IMR-90 (cell line): ENCODE measurements at regions of chr6 and their contacts with region 1.

Region 1: DNA sequence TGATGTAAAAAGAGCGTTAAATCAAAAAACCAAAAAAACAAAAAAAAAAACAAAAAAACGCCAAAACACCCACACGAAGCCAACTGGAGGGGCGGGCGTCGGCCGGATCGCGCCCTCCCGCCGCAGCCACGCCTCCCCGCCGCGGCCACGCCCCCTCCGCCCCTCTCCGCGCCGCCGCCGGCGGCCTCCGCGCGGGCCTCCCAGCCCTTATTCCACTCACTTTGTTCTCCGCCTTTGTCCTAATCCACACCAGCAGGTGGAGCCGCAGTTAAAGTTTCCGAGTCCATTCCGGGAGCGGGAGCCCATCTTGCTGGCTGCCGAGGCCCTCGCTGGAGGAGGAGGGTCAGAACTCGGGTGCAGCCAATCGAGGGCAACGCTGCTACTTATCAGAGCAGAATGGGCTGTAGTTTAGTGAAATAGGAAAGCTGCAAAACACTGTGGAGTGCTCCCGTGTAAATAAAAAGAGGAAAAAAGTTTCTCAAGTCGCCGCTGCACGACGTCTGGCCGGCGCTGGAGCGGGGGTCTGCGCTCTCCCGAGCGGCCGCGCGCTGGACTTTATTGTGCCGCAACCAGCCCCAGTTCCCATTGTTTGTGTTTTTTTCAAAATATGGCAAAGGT is at the start of gene ASF1A:
- DNase-seq: peak; percentile 98
- ATAC-seq: peak; percentile 89
- H3K4me3 ChIP-seq: peak within 1 kb of the TSS; percentile 79
- H3K27ac ChIP-seq: peak within 1 kb of the TSS; percentile 79
- H3K4me1 ChIP-seq: peaks cover 2% of the 10 kb centered on the region; the same call in 1 of the 2 replicates
- H3K27me3 ChIP-seq: no peaks in the 10 kb centered on the region
- CTCF ChIP-seq: peak; percentile 82
- POLR2A ChIP-seq: peak; percentile 49
- RAD21 ChIP-seq: peak; percentile 64
- total RNA-seq, gene ASF1A: 11.1 and 24.4 TPM in 2 replicates

Region 2: DNA sequence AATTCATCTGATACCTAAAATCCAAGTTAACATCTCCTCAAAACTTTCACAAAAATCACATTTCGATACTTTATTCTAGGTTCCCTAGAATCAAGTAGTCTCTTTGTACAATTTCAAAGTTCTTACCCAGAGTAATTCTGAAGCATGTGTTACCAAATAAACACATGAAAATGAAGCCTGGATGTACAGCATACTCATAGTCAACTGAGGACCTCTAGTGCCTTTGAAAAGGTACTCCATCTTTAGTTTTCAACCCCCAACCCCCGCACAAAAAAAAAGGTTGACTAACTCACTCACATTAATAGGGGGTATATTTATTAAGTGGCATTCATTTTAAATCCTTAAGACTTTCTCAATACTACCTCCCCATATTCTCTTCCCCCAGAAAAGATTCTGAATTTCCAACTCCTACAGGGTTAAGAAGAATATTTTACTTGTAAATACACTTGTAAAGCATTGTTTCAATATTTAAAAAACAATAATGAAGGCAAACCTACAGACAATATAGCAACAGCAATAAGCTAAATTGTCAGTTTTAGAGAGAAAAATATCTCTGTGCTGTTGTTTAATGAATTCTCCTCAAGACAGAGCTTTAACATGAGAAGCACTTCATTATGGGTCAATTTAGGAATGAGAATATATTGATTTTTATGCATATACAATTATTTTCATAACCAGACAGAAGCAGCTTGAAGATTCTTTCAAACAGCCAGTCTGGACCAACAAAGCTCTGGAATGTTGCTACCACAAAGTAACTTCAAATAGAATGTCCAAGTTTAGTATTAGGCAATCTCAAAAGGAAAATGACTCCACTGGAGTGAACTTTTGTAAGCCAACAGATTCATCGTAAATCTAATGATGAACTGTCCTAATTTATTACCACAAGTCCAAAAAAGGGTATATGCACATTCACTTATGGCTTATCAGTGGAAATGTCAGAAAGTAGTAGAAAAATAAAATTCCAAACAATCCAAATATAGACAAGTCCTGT is 342.6 kb before region 1 on chr6:
- CTCF ChIA-PET with region 1: no interaction called
- POLR2A ChIA-PET with region 1: no interaction called
- dilution Hi-C with region 1: no loop called
- in situ Hi-C with region 1: no loop called
- intact Hi-C with region 1: loop called (anchors 10 kb)
- DNase-seq: peak; percentile 79
- ATAC-seq: peak; percentile 84
- H3K4me3 ChIP-seq: no peak overlapping the region
- H3K27ac ChIP-seq: no peak overlapping the region
- H3K4me1 ChIP-seq: peaks cover 3% of the 10 kb centered on the region
- H3K27me3 ChIP-seq: no peaks in the 10 kb centered on the region
- CTCF ChIP-seq: peak; percentile 80
- POLR2A ChIP-seq: no peak
- RAD21 ChIP-seq: peak; percentile 81

Region 3: DNA sequence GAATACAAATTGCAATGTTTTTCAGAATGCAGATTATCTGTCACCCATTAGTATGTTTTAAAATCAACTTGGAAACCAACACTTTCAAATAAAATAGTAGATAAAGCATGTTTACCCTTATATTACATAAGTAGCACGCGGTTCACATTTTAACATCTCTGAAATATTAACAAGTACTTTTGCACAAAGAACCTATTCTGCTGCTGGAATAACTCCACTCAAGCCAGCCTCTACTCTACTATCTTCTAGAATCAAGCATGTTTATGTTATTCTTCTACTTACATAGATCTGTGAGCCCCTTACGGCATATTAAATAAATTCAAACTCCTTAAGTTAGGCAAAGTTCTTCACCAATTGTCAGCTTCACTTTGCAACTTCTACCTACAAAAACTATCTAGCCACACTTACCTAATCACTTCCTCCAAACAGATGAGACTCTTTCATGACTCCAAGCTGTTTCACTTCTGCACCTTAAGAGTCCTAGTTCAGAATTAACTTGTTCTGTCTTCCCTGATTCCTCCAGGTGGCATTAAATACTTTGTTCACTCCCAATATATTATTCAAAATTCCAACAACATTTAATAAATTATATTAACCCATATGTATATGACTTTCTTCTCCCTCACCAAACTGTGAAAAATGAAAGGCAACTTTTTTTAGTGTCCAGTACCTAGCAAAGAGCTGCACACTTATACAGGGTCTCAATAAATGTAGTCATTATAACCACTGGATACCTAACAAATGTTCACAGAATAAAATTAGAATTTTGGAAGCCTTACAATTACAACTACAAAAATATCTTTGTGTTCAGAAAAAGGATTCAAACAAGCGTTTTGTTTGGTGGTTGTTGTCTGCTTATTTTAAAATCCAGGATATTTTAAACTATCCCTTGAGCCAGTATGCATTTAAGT is 254.6 kb before region 1 on chr6:
- CTCF ChIA-PET with region 1: no interaction called
- POLR2A ChIA-PET with region 1: no interaction called
- dilution Hi-C with region 1: no loop called
- in situ Hi-C with region 1: no loop called
- intact Hi-C with region 1: loop called (anchors 2 kb)
- DNase-seq: no peak
- ATAC-seq: no peak
- H3K4me3 ChIP-seq: no peak overlapping the region
- H3K27ac ChIP-seq: no peak overlapping the region
- H3K4me1 ChIP-seq: peaks cover 3% of the 10 kb centered on the region; the same call in 1 of the 2 replicates
- H3K27me3 ChIP-seq: no peaks in the 10 kb centered on the region
- CTCF ChIP-seq: no peak
- POLR2A ChIP-seq: no peak
- RAD21 ChIP-seq: no peak

Region 4: DNA sequence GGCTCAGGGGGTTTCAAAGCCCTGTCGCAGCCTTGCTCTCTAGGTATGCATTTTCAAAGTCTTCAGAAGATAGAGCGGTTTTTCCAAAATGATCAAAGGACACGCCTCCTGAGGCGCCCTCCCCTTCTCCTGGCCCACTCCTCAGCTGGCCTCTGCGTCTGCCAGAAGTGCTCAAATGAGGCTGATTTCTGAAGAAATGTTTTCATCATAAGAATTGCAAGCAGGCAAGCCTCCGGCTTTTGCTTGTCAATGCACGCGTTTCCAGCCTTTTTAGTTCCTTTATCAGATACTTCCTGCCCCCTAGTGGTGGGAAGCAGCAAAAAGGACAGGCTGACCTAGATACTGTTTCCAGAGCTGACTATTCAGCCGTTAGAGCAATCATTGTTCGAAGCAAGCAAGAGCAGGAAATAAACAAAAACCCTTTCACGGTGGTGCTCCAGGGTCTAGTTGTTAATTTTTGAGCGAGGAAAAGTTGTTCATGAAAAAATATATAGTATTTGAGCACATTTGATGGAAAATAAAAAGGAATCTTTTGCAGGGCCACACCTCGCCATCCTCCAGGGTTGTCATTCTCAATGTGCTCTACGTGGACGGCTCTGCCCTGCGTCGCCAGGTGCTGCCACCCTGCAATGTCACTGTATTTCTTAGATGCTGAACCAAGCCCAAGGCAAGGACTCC is 93.4 kb before region 1 on chr6:
- CTCF ChIA-PET with region 1: no interaction called
- POLR2A ChIA-PET with region 1: no interaction called
- dilution Hi-C with region 1: no loop called
- in situ Hi-C with region 1: no loop called
- intact Hi-C with region 1: loop called (anchors 5 kb)
- DNase-seq: peak; percentile 85
- ATAC-seq: peak; percentile 99
- H3K4me3 ChIP-seq: no peak overlapping the region
- H3K27ac ChIP-seq: no peak overlapping the region
- H3K4me1 ChIP-seq: no peaks in the 10 kb centered on the region
- H3K27me3 ChIP-seq: no peaks in the 10 kb centered on the region
- CTCF ChIP-seq: peak; percentile 85
- POLR2A ChIP-seq: no peak
- RAD21 ChIP-seq: peak; percentile 71

Region 5: DNA sequence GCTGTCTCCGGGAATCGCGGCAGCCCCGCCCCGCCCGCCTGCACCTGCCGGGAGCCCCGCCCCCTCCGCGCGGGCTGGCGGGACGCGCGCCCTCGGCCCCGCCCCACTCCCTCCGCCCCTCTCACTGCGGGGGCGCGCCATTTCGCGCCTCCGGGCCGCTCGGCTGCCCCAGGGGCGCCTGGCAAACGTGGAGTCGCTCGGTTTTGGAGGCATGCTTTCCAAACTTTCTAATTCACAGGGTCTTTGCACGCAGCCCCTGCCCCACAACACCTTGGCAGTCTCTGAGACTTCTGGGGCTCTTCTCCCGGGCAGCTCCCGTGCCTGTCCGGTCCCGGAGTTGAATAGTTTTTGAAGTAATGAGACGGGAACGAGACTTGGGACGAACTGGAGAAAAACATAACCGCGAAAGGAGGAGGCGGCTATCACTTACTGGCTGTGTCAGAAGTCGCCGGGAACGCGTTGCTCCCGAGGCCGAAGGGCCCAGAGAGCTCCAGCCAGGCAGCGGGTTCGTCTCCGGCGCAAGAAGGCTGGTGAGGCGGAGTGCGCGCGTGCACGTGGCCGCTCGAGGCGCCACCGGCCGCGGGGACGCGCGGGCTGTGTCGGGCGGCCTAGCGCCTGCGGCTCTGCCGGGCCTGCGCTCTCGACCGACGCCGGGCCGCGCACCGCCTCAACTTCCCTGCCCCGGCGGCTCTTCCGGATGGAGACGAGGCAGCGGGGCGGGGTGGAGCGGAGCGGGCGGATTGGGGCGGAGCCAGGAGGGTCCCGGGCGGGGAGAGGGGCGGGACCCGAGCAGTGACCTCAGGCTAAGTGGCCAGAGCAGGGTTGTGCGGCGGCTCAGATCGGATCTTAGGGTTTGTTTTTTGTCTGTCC is 40.8 kb after region 1 on chr6 and contains the start of gene MCM9:
- CTCF ChIA-PET with region 1: no interaction called
- POLR2A ChIA-PET with region 1: no interaction called
- dilution Hi-C with region 1: no loop called
- in situ Hi-C with region 1: no loop called
- intact Hi-C with region 1: loop called (anchors 1 kb)
- DNase-seq: peak; percentile 77
- ATAC-seq: peak; percentile 98
- H3K4me3 ChIP-seq: peak within 1 kb of the TSS; percentile 86
- H3K27ac ChIP-seq: peak within 1 kb of the TSS; percentile 55
- H3K4me1 ChIP-seq: no peaks in the 10 kb centered on the region
- H3K27me3 ChIP-seq: no peaks in the 10 kb centered on the region
- CTCF ChIP-seq: no peak
- POLR2A ChIP-seq: peak; percentile 12; the same call in 1 of the 2 replicates
- RAD21 ChIP-seq: no peak
- total RNA-seq, gene MCM9: 7.2 and 7.8 TPM in 2 replicates

Region 6: DNA sequence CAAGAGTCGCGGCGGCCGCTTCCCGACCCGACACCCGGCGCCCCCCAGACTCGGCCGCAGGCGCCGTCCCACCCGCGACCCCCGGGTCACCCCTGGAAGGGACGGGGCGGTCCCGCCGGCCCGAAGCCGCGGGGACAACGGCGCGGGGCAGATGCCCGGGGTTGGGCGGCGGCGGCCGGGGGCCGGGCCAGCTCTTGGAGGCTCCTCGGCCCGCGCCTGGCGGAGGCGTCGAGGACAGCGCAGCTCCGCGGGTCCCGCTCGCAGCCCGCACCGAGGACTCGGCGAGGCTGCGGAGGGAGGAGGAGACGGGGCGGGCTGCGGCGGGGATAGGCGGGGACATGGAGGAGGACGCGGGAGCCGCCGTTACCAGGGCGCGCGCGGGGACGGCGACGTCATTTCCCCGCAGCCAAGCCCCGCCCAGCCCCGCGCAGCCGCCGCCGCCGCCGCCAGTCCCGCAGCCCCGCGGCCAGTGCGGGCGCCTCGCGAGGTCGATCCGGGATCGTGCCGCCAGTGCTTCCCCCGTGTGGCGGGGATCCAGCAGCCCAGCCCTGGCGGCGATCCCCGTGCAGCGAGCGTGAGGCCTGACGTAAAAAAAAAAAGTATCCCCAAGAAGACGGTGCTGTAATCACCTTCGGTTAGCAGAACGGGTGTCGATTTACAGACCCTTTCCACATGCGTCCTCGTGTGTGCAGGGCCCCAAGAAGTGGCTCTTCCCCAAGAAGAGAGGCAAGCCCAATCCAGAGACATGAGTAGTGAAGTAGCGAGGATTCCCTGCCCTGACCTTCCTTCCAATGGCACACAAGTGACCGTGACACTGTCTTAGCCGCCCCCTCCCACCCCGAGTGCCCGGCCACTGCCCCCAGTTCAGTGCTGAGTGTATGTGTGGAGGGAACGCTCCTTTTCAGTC is 184.7 kb after region 1 on chr6 and contains the start of gene FAM184A:
- CTCF ChIA-PET with region 1: no interaction called
- POLR2A ChIA-PET with region 1: no interaction called
- dilution Hi-C with region 1: no loop called
- in situ Hi-C with region 1: no loop called
- intact Hi-C with region 1: loop called (anchors 5 kb)
- DNase-seq: peak; percentile 48
- ATAC-seq: peak; percentile 87
- H3K4me3 ChIP-seq: peak within 1 kb of the TSS; percentile 48
- H3K27ac ChIP-seq: no peak within 1 kb of the TSS
- H3K4me1 ChIP-seq: no peaks in the 10 kb centered on the region; the same call in 1 of the 2 replicates
- H3K27me3 ChIP-seq: peaks cover 21% of the 10 kb centered on the region
- CTCF ChIP-seq: no peak; the same call in 1 of the 2 replicates
- POLR2A ChIP-seq: no peak
- RAD21 ChIP-seq: no peak
- total RNA-seq, gene FAM184A: not detected in 2 replicates

Region 7: GRCh38 chr6:119110601-119111548 is 217.0 kb after region 1 on chr6:
- CTCF ChIA-PET with region 1: no interaction called
- POLR2A ChIA-PET with region 1: no interaction called
- dilution Hi-C with region 1: no loop called
- in situ Hi-C with region 1: no loop called
- intact Hi-C with region 1: loop called (anchors 1 kb)
- DNase-seq: peak; percentile 56
- ATAC-seq: peak; percentile 85
- H3K4me3 ChIP-seq: no peak overlapping the region
- H3K27ac ChIP-seq: no peak overlapping the region
- H3K4me1 ChIP-seq: no peaks in the 10 kb centered on the region
- H3K27me3 ChIP-seq: peaks cover 5% of the 10 kb centered on the region; the same call in 1 of the 2 replicates
- CTCF ChIP-seq: peak; percentile 64
- POLR2A ChIP-seq: no peak
- RAD21 ChIP-seq: peak; percentile 71